ENCODE measurements at regions of chr11 and their contacts with region 1.

Region 1: DNA sequence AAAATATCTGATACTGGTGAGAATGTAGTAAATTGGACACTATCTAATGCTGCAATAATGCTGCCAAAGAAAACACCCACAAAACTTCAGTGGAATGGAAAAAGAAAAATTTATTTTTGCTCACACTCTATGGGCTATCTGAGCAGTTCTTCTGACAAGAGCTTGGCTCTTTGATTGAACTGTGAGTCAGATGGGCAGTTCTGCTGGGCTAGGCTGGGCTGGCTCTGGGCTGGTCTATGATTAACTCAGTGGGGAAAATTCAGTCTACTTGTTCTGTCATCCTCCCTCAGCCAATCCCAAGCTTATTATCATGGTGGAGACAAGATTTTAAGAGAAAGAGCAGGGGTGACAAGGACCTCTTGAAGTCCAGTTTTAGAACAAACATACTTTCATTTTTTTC is 1404.8 kb downstream of the LRRC4C start:
- DNase-seq: no peak
- H3K4me3 ChIP-seq: no peak overlapping the region
- H3K27ac ChIP-seq: no peak overlapping the region
- H3K4me1 ChIP-seq: no peaks in the 10 kb centered on the region
- H3K27me3 ChIP-seq: no peaks in the 10 kb centered on the region
- CTCF ChIP-seq: no peak
- POLR2A ChIP-seq: no peak

Region 2: DNA sequence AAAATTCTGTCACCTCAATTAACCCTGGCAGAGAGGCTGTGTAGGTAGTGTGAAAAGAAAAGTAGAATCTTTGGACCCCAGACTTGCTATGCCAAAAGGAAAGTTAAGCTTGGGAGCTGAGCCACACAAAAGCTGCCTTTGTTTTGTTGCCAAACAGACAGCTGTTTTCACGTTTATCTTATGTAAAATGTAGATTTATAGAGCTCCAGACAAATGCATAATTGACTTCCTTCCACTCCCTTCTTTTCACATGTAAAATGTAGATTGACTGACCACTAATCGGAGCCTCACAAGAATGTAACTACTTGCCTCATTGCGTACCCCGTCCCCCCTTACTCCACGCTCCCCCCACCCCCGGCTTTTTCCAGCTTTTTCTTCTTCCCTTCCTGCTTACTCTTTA is 1154.4 kb before region 1 on chr11:
- intact Hi-C with region 1: no loop called
- DNase-seq: no peak
- H3K4me3 ChIP-seq: no peak overlapping the region
- H3K27ac ChIP-seq: no peak overlapping the region
- H3K4me1 ChIP-seq: no peaks in the 10 kb centered on the region
- H3K27me3 ChIP-seq: no peaks in the 10 kb centered on the region
- CTCF ChIP-seq: no peak
- POLR2A ChIP-seq: no peak

Region 3: GRCh38 chr11:40037005-40037404 is 17.6 kb before region 1 on chr11:
- intact Hi-C with region 1: loop called (anchors 2 kb)
- DNase-seq: no peak
- H3K4me3 ChIP-seq: no peak overlapping the region
- H3K27ac ChIP-seq: no peak overlapping the region
- H3K4me1 ChIP-seq: no peaks in the 10 kb centered on the region
- H3K27me3 ChIP-seq: no peaks in the 10 kb centered on the region
- CTCF ChIP-seq: no peak
- POLR2A ChIP-seq: no peak

Region 4: GRCh38 chr11:40095446-40095845 is 40.8 kb after region 1 on chr11:
- intact Hi-C with region 1: no loop called
- DNase-seq: no peak
- H3K4me3 ChIP-seq: no peak overlapping the region
- H3K27ac ChIP-seq: no peak overlapping the region
- H3K4me1 ChIP-seq: no peaks in the 10 kb centered on the region
- H3K27me3 ChIP-seq: no peaks in the 10 kb centered on the region
- CTCF ChIP-seq: no peak
- POLR2A ChIP-seq: no peak

Measured in breast epithelium (tissue), 4 donors.